ENCODE measurements at regions of chr5 and their contacts with region 1.

Region 1: GRCh38 chr5:148569948-148570347 is 84.4 kb downstream of the HTR4 start:
- DNase-seq: no peak
- ATAC-seq: no peak
- H3K4me3 ChIP-seq: no peak overlapping the region
- H3K27ac ChIP-seq: no peak overlapping the region
- H3K4me1 ChIP-seq: no peaks in the 10 kb centered on the region
- H3K27me3 ChIP-seq: peaks cover 21% of the 10 kb centered on the region
- CTCF ChIP-seq: no peak
- POLR2A ChIP-seq: no peak
- RAD21 ChIP-seq: no peak

Region 2: DNA sequence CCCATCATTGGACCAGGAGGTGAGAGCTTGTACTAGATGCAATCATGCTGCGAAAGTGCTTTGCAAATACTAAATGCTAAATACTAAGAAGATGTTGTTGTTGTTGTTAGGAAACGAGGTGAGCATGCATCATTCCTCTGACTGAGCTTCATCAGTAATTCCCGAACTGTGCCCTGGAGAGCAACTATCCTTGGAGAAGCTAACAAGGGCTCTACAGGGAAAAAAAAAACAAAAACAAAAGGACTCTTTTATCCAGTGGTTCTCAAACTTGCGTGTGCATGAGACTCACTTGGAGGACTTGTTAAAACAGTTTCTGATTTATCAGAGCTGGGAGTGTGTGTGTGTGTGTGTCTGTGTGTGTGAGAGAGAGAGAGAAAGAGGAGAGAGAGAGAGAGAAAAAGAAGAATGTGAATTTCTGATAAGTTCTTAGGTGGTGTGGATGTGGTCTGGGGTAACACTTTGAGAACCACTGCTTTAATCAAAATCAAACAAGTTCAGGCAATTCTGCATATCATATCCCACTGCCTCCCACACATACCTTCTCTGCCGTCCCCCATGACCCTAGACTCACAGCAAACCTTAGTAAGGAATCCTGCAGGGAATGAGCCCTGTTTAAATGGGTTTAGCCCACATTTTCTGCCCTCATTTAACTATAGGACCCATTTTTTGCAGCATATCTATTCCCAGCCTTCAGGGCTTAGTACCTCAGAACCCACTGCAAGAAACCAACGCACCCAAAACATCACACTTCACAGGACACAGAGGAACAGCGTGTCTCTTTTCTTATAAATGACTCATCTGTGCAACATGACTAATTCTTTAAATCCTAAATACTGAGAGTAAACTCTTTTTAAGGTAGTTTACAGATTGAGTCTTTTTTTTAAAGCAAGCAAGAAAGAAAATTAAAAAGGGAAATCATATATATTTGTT is 1325.7 kb after region 1 on chr5:
- CTCF ChIA-PET with region 1: no interaction called
- POLR2A ChIA-PET with region 1: no interaction called
- RAD21 ChIA-PET with region 1: no interaction called
- intact Hi-C with region 1: loop called (anchors 10 kb)
- DNase-seq: no peak
- ATAC-seq: no peak
- H3K4me3 ChIP-seq: no peak overlapping the region
- H3K27ac ChIP-seq: no peak overlapping the region
- H3K4me1 ChIP-seq: 0 out of 4 replicates have a peak, but pooled peaks cover 0 to 3% of the 10 kb centered on the region in 2 experiments
- H3K27me3 ChIP-seq: no peaks in the 10 kb centered on the region
- CTCF ChIP-seq: no peak
- POLR2A ChIP-seq: no peak
- RAD21 ChIP-seq: no peak